ENCODE measurements at regions of chr4 and their contacts with region 1.

Region 1: GRCh38 chr4:25767877-25768725 is 94.7 kb downstream of the SEL1L3 start:
- DNase-seq: peak; percentile 32
- H3K4me3 ChIP-seq: no peak overlapping the region
- H3K27ac ChIP-seq: no peak overlapping the region
- H3K27me3 ChIP-seq: no peaks in the 10 kb centered on the region
- CTCF ChIP-seq: peak; percentile 99

Region 2: GRCh38 chr4:25367004-25367621 is 401.0 kb before region 1 on chr4:
- CTCF ChIA-PET with region 1: interaction called, 14 read pairs
- POLR2A ChIA-PET with region 1: no interaction called
- DNase-seq: peak; percentile 16
- H3K4me3 ChIP-seq: no peak overlapping the region
- H3K27ac ChIP-seq: no peak overlapping the region
- H3K27me3 ChIP-seq: no peaks in the 10 kb centered on the region
- CTCF ChIP-seq: peak; percentile 72

Region 3: DNA sequence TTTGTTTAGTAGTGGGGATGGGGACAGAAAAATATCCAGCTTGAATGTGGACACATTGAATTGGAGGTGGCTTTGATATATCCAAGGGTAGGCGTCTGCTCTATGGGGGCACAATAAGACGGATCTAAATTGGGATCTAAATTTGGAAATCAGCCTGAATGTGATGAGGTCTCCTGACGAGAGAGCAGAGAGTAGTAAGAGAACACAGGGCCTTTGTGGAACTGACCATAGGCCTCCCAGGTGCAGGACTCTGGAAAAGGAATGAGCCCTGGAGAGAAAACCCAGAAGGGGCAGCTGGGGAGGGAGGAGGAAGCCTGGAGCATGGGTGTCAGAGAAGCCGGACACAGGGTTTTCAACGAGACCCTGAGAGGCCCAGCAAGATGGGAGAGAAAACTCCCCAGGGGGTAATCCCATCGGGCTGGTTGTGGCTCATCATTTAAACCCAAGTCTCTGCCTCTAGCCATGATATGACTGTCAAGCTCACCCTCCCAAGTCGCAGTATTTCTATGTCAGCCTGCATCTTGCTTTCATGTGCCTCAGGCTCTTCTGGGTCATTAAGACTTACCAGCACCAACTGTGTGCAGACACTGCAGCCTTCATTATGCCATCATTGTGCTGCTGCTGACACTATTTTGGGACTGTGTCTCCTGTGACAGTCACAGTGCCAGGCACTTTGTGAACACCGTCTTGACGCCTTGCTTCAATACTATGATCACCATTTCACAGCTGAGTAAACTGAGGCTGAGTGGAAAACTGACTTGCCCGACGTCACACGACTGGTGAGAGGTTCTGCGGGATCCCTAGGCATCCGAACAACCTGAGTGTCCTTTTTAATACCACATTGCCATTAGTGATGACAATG is 333.9 kb before region 1 on chr4:
- CTCF ChIA-PET with region 1: interaction called, 302 read pairs
- POLR2A ChIA-PET with region 1: no interaction called
- DNase-seq: no peak
- H3K4me3 ChIP-seq: no peak overlapping the region
- H3K27ac ChIP-seq: no peak overlapping the region
- H3K27me3 ChIP-seq: peaks cover 2% of the 10 kb centered on the region
- CTCF ChIP-seq: no peak

Region 4: DNA sequence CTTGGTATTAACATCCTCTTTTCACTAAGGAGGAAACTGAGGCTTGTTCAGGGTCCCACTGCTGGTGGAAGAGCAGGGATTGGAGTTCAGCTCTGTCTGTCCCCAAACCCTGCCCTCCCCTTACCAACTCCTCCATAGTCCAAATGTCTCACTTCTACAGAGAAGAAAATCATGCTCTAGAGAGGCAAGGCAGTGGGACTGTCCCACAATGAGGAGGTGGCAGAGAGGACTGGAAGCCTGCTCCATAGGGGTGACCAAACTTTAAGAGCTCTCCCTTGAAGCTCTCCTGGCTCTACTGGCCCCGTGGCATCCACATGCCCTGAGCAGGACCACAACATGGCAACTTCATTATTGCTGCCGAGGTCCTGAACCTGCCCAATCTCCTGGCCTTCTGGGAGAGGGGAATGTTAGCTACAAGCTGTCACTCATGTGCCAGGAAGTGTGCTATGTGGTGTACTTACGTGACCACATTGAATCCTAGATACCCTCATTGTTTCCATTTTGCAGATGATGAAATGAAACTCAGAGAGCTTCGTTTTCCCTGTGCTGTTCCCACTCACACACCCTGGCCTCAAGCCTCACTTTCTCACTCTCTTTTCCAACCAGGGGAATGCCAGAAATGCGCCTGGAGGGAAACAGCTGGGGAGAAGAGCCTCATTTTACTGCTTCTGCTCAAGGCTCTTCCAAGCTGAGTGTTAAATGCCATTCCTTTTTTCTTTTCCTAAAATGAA is 319.6 kb before region 1 on chr4:
- CTCF ChIA-PET with region 1: interaction called, 302 read pairs
- POLR2A ChIA-PET with region 1: no interaction called
- DNase-seq: peak; percentile 10
- H3K4me3 ChIP-seq: no peak overlapping the region
- H3K27ac ChIP-seq: no peak overlapping the region
- H3K27me3 ChIP-seq: peaks cover 8% of the 10 kb centered on the region
- CTCF ChIP-seq: no peak

Region 5: GRCh38 chr4:25750874-25751273 is 17.2 kb before region 1 on chr4:
- CTCF ChIA-PET with region 1: interaction called, 37 read pairs
- POLR2A ChIA-PET with region 1: interaction called, 6 read pairs
- DNase-seq: no peak
- H3K4me3 ChIP-seq: no peak overlapping the region
- H3K27ac ChIP-seq: no peak overlapping the region
- H3K27me3 ChIP-seq: no peaks in the 10 kb centered on the region
- CTCF ChIP-seq: no peak